ENCODE measurements at regions of chr7 and their contacts with region 1.

Region 1: GRCh38 chr7:79298145-79298760 is 155.2 kb downstream of the MAGI2 start:
- DNase-seq: peak; percentile 75

Region 2: GRCh38 chr7:79475455-79475854 is 177.2 kb after region 1 on chr7:
- in situ Hi-C with region 1: no loop called
- DNase-seq: no peak

Region 3: GRCh38 chr7:80047856-80048459 is 749.7 kb after region 1 on chr7:
- in situ Hi-C with region 1: loop called (anchors 25 kb)
- DNase-seq: peak; percentile 37

Measured in ACHN (cell line).